ENCODE measurements at regions of chr5 and their contacts with region 1.

Region 1: GRCh38 chr5:151164686-151165392 is 7.3 kb upstream of the ANXA6 start:
- DNase-seq: peak; percentile 89
- ATAC-seq: peak; percentile 97
- H3K4me3 ChIP-seq: no peak overlapping the region
- H3K4me3 Mint-ChIP-seq: no peak overlapping the region
- H3K27ac ChIP-seq: no peak overlapping the region
- H3K27ac Mint-ChIP-seq: peak overlapping the region; percentile 72
- H3K4me1 ChIP-seq: peaks cover 21 to 28% of the 10 kb centered on the region in 2 donors
- H3K4me1 Mint-ChIP-seq: peaks cover 36% of the 10 kb centered on the region
- H3K27me3 ChIP-seq: no peaks in the 10 kb centered on the region
- H3K27me3 Mint-ChIP-seq: no peaks in the 10 kb centered on the region
- CTCF ChIP-seq: peak; percentile 95

Region 2: DNA sequence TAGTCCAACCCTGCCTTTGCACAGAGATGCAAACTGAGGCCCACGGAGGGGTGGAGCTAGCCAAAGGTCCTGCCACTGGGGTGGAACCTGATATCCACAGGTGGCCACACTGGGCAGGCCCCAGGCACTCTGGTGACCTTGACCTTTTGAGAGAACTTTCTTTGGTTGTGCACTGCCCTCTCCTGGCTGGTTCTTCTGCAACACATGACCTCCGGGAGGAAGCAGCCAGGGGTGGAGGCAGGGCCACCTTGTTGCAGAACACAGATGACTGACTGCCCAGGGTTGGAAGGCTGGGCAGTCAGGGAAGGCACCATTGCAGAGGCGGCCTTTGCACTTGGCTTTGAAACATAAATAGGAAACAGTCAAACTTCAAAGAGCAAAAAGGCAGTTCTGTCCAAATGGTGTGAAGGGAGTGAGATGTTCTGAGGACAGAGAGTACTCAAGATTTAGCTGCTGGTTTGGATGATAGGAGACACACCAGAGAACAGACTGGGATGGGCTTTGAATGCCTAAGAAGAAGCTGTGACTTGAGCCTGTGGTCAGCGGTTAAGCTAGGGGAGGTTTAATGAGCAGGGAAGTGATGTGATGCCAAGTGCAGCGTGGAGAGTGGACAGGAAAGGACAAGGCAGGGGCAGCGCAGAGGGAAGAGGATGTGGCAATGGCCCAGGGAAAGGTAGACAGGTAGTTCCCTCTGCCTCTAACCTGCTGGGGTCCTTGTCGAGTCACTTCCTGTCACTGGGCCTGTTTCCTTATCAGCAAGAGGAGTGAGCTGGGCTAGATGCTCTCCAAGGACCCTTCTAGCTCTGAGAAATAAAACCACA is 814.1 kb before region 1 on chr5:
- CTCF ChIA-PET with region 1: no interaction called
- POLR2A ChIA-PET with region 1: no interaction called
- intact Hi-C with region 1: no loop called
- DNase-seq: peak; percentile 58
- ATAC-seq: peak; percentile 80
- H3K4me3 ChIP-seq: no peak overlapping the region
- H3K4me3 Mint-ChIP-seq: no peak overlapping the region
- H3K27ac ChIP-seq: no peak overlapping the region
- H3K27ac Mint-ChIP-seq: peak overlapping the region; percentile 51
- H3K4me1 ChIP-seq: peaks cover 8% of the 10 kb centered on the region in 2 donors
- H3K4me1 Mint-ChIP-seq: peaks cover 7% of the 10 kb centered on the region
- H3K27me3 ChIP-seq: no peaks in the 10 kb centered on the region
- H3K27me3 Mint-ChIP-seq: no peaks in the 10 kb centered on the region
- CTCF ChIP-seq: no peak

Region 3: DNA sequence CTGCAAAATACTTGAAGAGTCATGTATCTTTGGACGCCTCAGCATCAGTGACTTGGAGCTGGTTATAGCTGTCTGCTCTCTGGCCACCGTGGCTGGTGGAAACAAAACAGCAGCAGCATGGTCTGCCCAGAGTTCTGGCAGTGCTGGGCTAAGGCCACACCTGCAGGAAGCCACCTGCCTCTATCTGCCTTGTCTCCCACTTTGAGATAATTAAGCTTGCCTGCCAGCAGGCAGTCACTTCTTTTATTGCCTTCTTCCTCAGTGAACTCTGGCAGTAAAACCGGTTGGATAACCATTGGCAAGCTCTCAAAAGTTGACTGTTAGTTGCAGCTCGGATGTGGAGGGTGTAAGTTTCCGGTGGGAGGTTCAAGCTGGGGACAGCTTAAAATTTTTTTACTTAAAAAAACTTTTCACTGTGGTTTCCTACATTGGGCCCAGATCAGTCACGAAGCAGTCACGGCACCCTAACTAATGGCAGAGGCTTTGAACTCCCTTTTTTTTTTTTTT is 381.4 kb before region 1 on chr5:
- CTCF ChIA-PET with region 1: no interaction called
- POLR2A ChIA-PET with region 1: no interaction called
- intact Hi-C with region 1: no loop called
- DNase-seq: no peak
- ATAC-seq: no peak
- H3K4me3 ChIP-seq: no peak overlapping the region
- H3K4me3 Mint-ChIP-seq: no peak overlapping the region
- H3K27ac ChIP-seq: no peak overlapping the region
- H3K27ac Mint-ChIP-seq: no peak overlapping the region
- H3K4me1 ChIP-seq: peaks cover 22 to 26% of the 10 kb centered on the region in 2 donors
- H3K4me1 Mint-ChIP-seq: peaks cover 24% of the 10 kb centered on the region
- H3K27me3 ChIP-seq: peaks cover 0 to 18% (median 7%) of the 10 kb centered on the region in 4 experiments
- H3K27me3 Mint-ChIP-seq: peaks cover 22% of the 10 kb centered on the region
- CTCF ChIP-seq: no peak

Region 4: DNA sequence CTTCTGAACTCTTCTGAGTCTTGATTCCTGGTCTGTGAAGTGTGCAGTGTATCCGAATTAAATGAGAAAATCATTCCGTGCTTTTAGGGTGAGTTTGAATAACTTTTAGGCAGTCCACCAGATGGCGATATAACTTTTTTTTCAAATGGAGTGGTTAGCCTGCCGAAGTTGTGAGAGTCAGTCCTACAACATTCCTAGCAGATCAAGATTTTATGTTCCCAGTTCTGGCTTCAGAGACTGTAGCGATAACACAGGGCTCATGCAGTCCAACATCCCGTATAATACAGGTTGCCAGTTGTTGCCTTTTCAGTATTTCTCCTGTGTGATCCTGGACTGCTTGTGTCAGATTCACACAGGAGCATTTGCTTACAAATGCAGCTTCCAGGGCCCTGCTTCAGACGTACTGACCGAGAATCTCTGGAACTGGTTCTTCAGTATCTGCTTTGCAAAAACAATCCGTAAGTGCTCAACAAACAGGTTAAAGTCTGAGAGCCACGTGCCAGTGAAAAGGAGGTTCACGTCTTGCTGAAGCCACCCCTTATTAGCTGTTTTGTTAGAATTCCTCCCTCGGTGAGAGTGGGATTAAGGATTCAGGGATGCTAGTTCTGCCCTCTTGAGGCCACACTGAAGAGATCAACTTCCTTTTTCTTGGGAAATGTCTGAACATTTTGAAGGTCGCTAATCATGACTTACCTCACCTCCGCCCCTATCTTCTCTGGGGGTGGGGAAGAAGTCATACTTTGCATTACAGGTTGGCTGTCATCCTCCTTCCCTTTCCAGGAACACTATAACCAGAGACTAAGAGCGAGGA is 363.5 kb before region 1 on chr5:
- CTCF ChIA-PET with region 1: interaction called, 40 read pairs
- POLR2A ChIA-PET with region 1: no interaction called
- intact Hi-C with region 1: loop called (anchors 1 kb)
- DNase-seq: peak; percentile 69
- ATAC-seq: no peak
- H3K4me3 ChIP-seq: no peak overlapping the region
- H3K4me3 Mint-ChIP-seq: no peak overlapping the region
- H3K27ac ChIP-seq: no peak overlapping the region
- H3K27ac Mint-ChIP-seq: no peak overlapping the region
- H3K4me1 ChIP-seq: peaks cover 3 to 4% of the 10 kb centered on the region in 2 donors
- H3K4me1 Mint-ChIP-seq: no peaks in the 10 kb centered on the region
- H3K27me3 ChIP-seq: peaks cover 0 to 7% (median 5%) of the 10 kb centered on the region in 4 experiments
- H3K27me3 Mint-ChIP-seq: peaks cover 30% of the 10 kb centered on the region
- CTCF ChIP-seq: peak; percentile 83

Region 5: DNA sequence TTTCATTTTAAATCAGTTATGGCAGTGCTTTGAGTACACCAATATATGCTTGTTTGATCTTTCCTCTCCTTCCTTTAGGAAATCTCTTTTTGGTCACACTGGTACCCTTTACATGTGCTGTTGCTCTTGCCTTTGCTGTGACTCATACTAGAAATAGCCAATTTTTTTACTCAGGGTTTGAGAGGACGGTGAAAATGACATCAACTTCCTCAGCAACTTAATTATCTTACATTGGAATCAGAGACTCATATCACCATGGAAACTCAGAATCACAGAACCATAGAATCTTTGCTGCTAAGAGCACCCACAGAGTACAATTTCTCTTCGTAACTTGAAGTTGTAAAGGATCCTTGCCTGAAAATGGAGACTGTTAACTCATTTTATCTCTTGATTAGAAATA is 246.2 kb before region 1 on chr5:
- CTCF ChIA-PET with region 1: no interaction called
- POLR2A ChIA-PET with region 1: no interaction called
- intact Hi-C with region 1: no loop called
- DNase-seq: no peak
- ATAC-seq: no peak
- H3K4me3 ChIP-seq: no peak overlapping the region
- H3K4me3 Mint-ChIP-seq: no peak overlapping the region
- H3K27ac ChIP-seq: no peak overlapping the region
- H3K27ac Mint-ChIP-seq: no peak overlapping the region
- H3K4me1 ChIP-seq: no peaks in the 10 kb centered on the region
- H3K4me1 Mint-ChIP-seq: no peaks in the 10 kb centered on the region
- H3K27me3 ChIP-seq: peaks cover 0 to 7% (median 0%) of the 10 kb centered on the region in 4 experiments
- H3K27me3 Mint-ChIP-seq: peaks cover 14% of the 10 kb centered on the region
- CTCF ChIP-seq: no peak

Region 6: GRCh38 chr5:151080623-151081430 is 84.0 kb before region 1 on chr5 and contains the start of gene TNIP1:
- CTCF ChIA-PET with region 1: interaction called, 11 read pairs
- POLR2A ChIA-PET with region 1: no interaction called
- intact Hi-C with region 1: no loop called
- DNase-seq: peak; percentile 96
- ATAC-seq: peak; percentile 88
- H3K4me3 ChIP-seq: peak within 1 kb of the TSS; percentile 71 to 96 (median 85)
- H3K4me3 Mint-ChIP-seq: peak within 1 kb of the TSS; percentile 87
- H3K27ac ChIP-seq: peak within 1 kb of the TSS; percentile 96 to 100
- H3K27ac Mint-ChIP-seq: peak within 1 kb of the TSS; percentile 88
- H3K4me1 ChIP-seq: peaks cover 83 to 84% of the 10 kb centered on the region in 2 donors
- H3K4me1 Mint-ChIP-seq: peaks cover 82% of the 10 kb centered on the region
- H3K27me3 ChIP-seq: no peaks in the 10 kb centered on the region
- H3K27me3 Mint-ChIP-seq: no peaks in the 10 kb centered on the region
- CTCF ChIP-seq: no peak
- total RNA-seq, gene TNIP1: 294 and 295 TPM in 2 replicates

Region 7: GRCh38 chr5:151183451-151184245 is 18.8 kb after region 1 on chr5:
- CTCF ChIA-PET with region 1: interaction called, 22 read pairs
- POLR2A ChIA-PET with region 1: interaction called, 3 read pairs
- intact Hi-C with region 1: loop called (anchors 2 kb)
- DNase-seq: no peak
- ATAC-seq: no peak
- H3K4me3 ChIP-seq: no peak overlapping the region
- H3K4me3 Mint-ChIP-seq: no peak overlapping the region
- H3K27ac ChIP-seq: peak overlapping the region in 1 of 2 donors; percentile 20
- H3K27ac Mint-ChIP-seq: no peak overlapping the region
- H3K4me1 ChIP-seq: peaks cover 12 to 15% of the 10 kb centered on the region in 2 donors
- H3K4me1 Mint-ChIP-seq: peaks cover 38% of the 10 kb centered on the region
- H3K27me3 ChIP-seq: no peaks in the 10 kb centered on the region
- H3K27me3 Mint-ChIP-seq: no peaks in the 10 kb centered on the region
- CTCF ChIP-seq: no peak

Region 8: GRCh38 chr5:151196556-151197290 is 31.9 kb after region 1 on chr5:
- CTCF ChIA-PET with region 1: interaction called, 13 read pairs
- POLR2A ChIA-PET with region 1: no interaction called
- intact Hi-C with region 1: loop called (anchors 2 kb)
- DNase-seq: peak; percentile 82
- ATAC-seq: peak; percentile 95
- H3K4me3 ChIP-seq: no peak overlapping the region
- H3K4me3 Mint-ChIP-seq: peak overlapping the region; percentile 67
- H3K27ac ChIP-seq: peak overlapping the region; percentile 61 to 67
- H3K27ac Mint-ChIP-seq: peak overlapping the region; percentile 97
- H3K4me1 ChIP-seq: peaks cover 41 to 55% of the 10 kb centered on the region in 2 donors
- H3K4me1 Mint-ChIP-seq: peaks cover 63% of the 10 kb centered on the region
- H3K27me3 ChIP-seq: no peaks in the 10 kb centered on the region
- H3K27me3 Mint-ChIP-seq: no peaks in the 10 kb centered on the region
- CTCF ChIP-seq: no peak

Region 9: DNA sequence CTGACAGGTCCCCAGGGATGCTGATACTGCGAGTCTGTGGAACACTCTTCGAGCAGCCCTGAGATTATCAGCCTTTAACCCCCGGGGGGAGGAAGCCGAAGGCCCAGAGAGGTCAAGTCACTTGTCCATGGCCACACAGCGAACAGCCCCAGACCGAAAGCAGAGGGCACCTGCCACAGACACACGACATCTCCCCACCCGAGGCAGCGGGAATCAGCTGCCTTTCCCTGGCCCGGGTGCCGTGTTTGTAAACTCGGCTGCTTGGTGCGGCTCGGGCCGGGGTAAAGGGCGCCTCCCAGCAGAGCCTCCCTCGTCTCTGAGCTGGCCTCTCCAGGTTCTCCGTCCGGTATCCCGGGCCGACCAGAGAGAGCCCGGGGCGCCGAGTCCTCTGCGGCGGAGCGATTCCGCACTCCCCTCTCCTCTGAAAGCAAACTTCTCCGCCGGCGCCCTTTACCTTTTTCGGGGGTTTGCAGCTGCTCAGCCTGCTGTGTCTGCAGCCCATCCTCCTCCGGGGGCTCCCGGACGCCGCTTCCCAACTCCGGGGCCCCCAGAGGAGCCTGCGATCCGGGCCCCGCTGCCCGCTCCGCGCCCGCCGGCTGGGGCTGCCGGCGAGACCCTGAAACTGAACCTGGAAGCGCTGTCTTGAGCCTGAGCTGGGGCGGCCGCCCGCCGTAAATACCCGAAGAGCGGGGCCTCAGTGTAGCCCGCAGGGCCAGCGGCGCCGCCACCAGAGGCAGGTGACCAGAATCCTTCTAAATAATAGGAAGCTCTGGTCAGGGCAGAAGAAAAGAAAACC is 58.8 kb after region 1 on chr5 and contains the start of gene CCDC69:
- CTCF ChIA-PET with region 1: interaction called, 32 read pairs
- POLR2A ChIA-PET with region 1: interaction called, 3 read pairs
- intact Hi-C with region 1: no loop called
- DNase-seq: peak; percentile 75
- ATAC-seq: peak; percentile 42
- H3K4me3 ChIP-seq: peak within 1 kb of the TSS; percentile 70 to 86 (median 80)
- H3K4me3 Mint-ChIP-seq: peak within 1 kb of the TSS; percentile 88
- H3K27ac ChIP-seq: peak within 1 kb of the TSS; percentile 94 to 99
- H3K27ac Mint-ChIP-seq: peak within 1 kb of the TSS; percentile 92
- H3K4me1 ChIP-seq: peaks cover 64 to 75% of the 10 kb centered on the region in 2 donors
- H3K4me1 Mint-ChIP-seq: peaks cover 71% of the 10 kb centered on the region
- H3K27me3 ChIP-seq: no peaks in the 10 kb centered on the region
- H3K27me3 Mint-ChIP-seq: no peaks in the 10 kb centered on the region
- CTCF ChIP-seq: no peak
- total RNA-seq, gene CCDC69: 125 and 129 TPM in 2 replicates

Measured in B cell (primary cell).